CD8-positive, alpha-beta T cell (primary cell): ENCODE measurements at regions of chr6 and their contacts with region 1.

Region 1: DNA sequence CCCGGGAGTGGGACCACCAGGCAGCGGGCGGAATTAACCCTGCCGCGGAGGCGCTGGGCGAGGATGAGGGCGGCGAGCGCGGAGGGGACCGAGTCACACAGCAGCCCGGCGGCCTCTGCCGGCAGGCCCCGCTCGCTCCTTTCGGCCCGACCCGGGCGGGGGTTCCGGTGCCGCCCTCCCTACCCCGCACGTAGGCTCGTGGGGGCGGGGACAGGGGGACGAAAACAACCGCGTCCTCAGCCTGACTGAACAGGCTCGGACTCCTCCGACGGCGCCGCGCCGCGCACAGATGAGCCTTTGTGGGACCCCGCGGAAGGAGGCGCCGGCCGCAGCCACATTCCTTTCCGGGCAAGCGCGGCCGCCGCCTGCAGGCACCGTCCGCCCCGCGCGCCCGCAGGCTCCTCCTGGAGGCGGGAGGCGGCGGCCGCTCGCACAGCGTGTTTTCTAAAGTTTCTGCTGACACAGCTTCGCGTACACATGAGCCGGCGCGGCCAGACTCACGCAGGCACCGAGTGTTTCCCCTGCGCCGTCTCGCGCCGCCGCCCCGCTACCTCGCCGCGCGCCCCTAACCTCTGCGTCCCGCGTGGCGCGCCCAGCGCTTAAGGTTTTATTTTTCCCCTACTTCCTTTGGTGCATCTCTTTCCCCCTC is 244.3 kb downstream of the ARID1B start:
- DNase-seq: peak; percentile 75 to 93 (median 89)
- ATAC-seq: peak; percentile 75
- H3K4me3 ChIP-seq: peak overlapping the region; percentile 66 to 93
- H3K4me3 Mint-ChIP-seq: peak overlapping the region; percentile 95
- H3K27ac ChIP-seq: peak overlapping the region; percentile 96 to 98
- H3K27ac Mint-ChIP-seq: peak overlapping the region; percentile 100
- H3K4me1 ChIP-seq: peaks cover 8% of the 10 kb centered on the region
- H3K4me1 Mint-ChIP-seq: peaks cover 59% of the 10 kb centered on the region
- H3K27me3 ChIP-seq: no peaks in the 10 kb centered on the region
- H3K27me3 Mint-ChIP-seq: no peaks in the 10 kb centered on the region
- CTCF ChIP-seq: no peak

Region 2: DNA sequence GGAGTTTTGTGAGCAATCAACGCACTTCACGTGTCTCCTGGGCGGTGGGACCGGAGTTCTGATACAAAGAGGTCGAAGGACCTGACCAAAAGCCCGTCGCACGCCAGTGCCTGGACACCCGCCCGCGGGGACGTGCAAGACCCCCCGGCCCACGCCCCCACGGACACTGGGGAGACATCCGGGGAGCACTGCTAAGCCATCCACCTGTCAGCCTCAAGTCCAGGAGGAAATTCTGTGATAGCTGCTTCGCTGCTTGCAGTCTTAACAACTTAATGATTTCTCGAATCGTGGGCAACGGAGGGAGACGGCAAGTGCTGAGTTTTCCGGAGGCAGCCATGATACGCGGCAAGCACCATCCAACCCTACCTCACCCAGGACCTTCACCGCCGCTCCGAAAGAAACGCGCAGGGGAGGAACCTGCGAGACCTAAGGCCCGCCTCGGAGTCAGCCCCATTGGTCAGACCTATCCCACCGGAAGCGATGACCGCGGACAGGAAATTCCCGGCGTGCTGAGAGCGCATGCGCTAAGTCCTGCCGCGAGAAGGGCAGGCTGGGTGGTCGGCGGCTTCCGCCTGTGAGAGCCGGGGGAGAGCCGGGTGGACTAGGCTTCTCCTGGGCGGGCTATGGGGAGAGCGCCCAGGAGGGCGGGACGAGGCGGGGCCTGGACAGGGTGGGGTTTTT is 1707.2 kb before region 1 on chr6 and contains the start of gene TFB1M:
- CTCF ChIA-PET with region 1: no interaction called
- POLR2A ChIA-PET with region 1: no interaction called
- intact Hi-C with region 1: loop called in 1 of 2 experiments (anchors 2 kb)
- DNase-seq: peak; percentile 91 to 99 (median 97)
- ATAC-seq: peak; percentile 93
- H3K4me3 ChIP-seq: peak within 1 kb of the TSS; percentile 92 to 97
- H3K4me3 Mint-ChIP-seq: peak within 1 kb of the TSS; percentile 98
- H3K27ac ChIP-seq: peak within 1 kb of the TSS; percentile 83 to 87
- H3K27ac Mint-ChIP-seq: peak within 1 kb of the TSS; percentile 97
- H3K4me1 ChIP-seq: peaks cover 7% of the 10 kb centered on the region
- H3K4me1 Mint-ChIP-seq: peaks cover 35% of the 10 kb centered on the region
- H3K27me3 ChIP-seq: no peaks in the 10 kb centered on the region
- H3K27me3 Mint-ChIP-seq: no peaks in the 10 kb centered on the region
- CTCF ChIP-seq: no peak
- total RNA-seq, gene TFB1M: 6.3 to 7.9 TPM

Region 3: DNA sequence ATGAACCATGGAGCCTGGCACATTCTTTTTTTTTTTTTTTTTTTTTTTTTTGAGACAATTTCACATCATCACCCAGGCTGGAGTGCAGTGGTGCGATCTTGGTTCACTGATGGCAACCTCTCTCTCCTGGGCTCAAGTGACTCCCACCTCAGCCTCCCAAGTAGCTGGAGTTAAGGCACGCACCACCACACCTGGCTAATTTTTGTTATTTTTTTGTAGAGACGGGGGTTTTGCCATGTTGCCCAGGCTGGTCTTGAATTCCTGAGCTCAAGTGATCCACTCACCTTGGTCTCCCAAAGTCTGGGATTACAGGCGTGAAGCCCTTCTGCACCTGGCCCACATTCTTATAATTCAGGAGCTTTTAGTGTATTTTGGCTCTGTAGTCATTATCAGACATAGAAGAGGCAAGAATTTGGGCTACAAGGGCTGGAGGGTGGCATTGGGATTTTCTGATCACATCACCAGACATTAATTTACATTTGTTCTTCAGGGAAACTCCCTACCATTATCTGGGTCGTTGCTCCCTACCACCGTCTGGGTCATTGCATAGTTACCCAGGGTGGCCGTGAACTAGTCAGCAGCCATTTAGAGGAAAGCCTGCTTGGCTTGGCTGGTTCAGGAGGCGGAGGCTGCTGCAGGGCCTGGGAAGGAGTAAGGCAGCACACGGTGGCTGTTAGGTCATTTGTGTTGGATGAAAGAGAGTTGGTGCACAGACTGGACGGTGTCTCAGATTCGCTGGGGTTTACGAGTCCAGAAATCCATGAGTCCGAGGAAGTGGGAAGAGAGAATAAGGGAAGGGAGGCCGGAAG is 226.7 kb before region 1 on chr6:
- CTCF ChIA-PET with region 1: no interaction called
- POLR2A ChIA-PET with region 1: no interaction called
- intact Hi-C with region 1: no loop called
- DNase-seq: peak in 1 of 9 experiments; percentile 42
- ATAC-seq: peak; percentile 28
- H3K4me3 ChIP-seq: no peak overlapping the region
- H3K4me3 Mint-ChIP-seq: peak overlapping the region; percentile 46
- H3K27ac ChIP-seq: no peak overlapping the region
- H3K27ac Mint-ChIP-seq: peak overlapping the region; percentile 84
- H3K4me1 ChIP-seq: peaks cover 64% of the 10 kb centered on the region
- H3K4me1 Mint-ChIP-seq: peaks cover 91% of the 10 kb centered on the region
- H3K27me3 ChIP-seq: no peaks in the 10 kb centered on the region
- H3K27me3 Mint-ChIP-seq: no peaks in the 10 kb centered on the region
- CTCF ChIP-seq: no peak

Region 4: GRCh38 chr6:156953479-156954146 is 67.9 kb before region 1 on chr6:
- CTCF ChIA-PET with region 1: no interaction called
- POLR2A ChIA-PET with region 1: no interaction called
- intact Hi-C with region 1: loop called in 1 of 2 experiments (anchors 2 kb)
- DNase-seq: peak in 5 of 9 experiments; percentile 33 to 87 (median 67)
- ATAC-seq: peak; percentile 93
- H3K4me3 ChIP-seq: no peak overlapping the region
- H3K4me3 Mint-ChIP-seq: no peak overlapping the region
- H3K27ac ChIP-seq: no peak overlapping the region
- H3K27ac Mint-ChIP-seq: no peak overlapping the region
- H3K4me1 ChIP-seq: peaks cover 30% of the 10 kb centered on the region
- H3K4me1 Mint-ChIP-seq: peaks cover 73% of the 10 kb centered on the region
- H3K27me3 ChIP-seq: no peaks in the 10 kb centered on the region
- H3K27me3 Mint-ChIP-seq: no peaks in the 10 kb centered on the region
- CTCF ChIP-seq: peak; percentile 45

Region 5: GRCh38 chr6:157054531-157054979 is 33.1 kb after region 1 on chr6:
- CTCF ChIA-PET with region 1: no interaction called
- POLR2A ChIA-PET with region 1: interaction called, 7 read pairs
- intact Hi-C with region 1: loop called in 1 of 2 experiments (anchors 1 kb)
- DNase-seq: peak in 5 of 9 experiments; percentile 14 to 87 (median 53)
- ATAC-seq: peak; percentile 94
- H3K4me3 ChIP-seq: no peak overlapping the region
- H3K4me3 Mint-ChIP-seq: peak overlapping the region; percentile 43
- H3K27ac ChIP-seq: peak overlapping the region; percentile 13 to 73
- H3K27ac Mint-ChIP-seq: peak overlapping the region; percentile 95
- H3K4me1 ChIP-seq: peaks cover 26% of the 10 kb centered on the region
- H3K4me1 Mint-ChIP-seq: peaks cover 39% of the 10 kb centered on the region
- H3K27me3 ChIP-seq: no peaks in the 10 kb centered on the region
- H3K27me3 Mint-ChIP-seq: no peaks in the 10 kb centered on the region
- CTCF ChIP-seq: no peak

Region 6: DNA sequence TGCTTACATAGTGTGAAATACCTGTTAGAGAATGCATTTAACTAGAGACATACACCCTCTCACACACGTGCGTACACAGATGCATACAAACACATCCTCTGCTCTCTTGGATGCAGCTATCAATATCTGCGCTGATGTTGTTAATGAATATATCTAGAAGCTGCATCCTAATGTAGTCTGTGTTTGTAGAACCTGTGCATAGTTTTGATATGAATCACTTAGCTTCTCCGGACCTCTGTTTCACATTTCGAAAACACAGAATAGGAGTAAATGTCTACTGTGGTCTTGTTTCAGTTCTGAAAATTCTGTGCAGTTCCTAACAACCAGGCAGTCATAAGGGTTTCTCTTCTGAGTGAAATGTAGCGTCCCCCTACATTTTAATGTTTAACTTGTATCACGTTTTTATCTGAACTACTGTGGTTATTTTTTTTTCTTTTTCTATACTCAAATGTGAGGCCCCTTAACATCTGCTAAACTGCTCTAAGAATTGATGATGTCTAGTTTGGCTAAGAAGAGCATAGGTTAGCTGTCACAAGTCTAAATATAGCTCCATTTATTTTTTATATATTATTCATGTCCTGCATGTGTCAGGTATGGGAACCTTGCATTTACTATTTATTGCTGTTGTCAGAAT is 47.3 kb after region 1 on chr6:
- CTCF ChIA-PET with region 1: no interaction called
- POLR2A ChIA-PET with region 1: no interaction called
- intact Hi-C with region 1: no loop called
- DNase-seq: no peak
- ATAC-seq: no peak
- H3K4me3 ChIP-seq: no peak overlapping the region
- H3K4me3 Mint-ChIP-seq: no peak overlapping the region
- H3K27ac ChIP-seq: no peak overlapping the region
- H3K27ac Mint-ChIP-seq: no peak overlapping the region
- H3K4me1 ChIP-seq: peaks cover 15% of the 10 kb centered on the region
- H3K4me1 Mint-ChIP-seq: peaks cover 52% of the 10 kb centered on the region
- H3K27me3 ChIP-seq: no peaks in the 10 kb centered on the region
- H3K27me3 Mint-ChIP-seq: no peaks in the 10 kb centered on the region
- CTCF ChIP-seq: no peak

Region 7: GRCh38 chr6:158819213-158819909 is 1797.9 kb after region 1 on chr6 and contains the start of gene EZR:
- CTCF ChIA-PET with region 1: no interaction called
- POLR2A ChIA-PET with region 1: no interaction called
- intact Hi-C with region 1: loop called in 1 of 2 experiments (anchors 5 kb)
- DNase-seq: peak; percentile 75 to 95 (median 88)
- ATAC-seq: peak; percentile 63
- H3K4me3 ChIP-seq: peak within 1 kb of the TSS; percentile 49 to 83
- H3K4me3 Mint-ChIP-seq: peak within 1 kb of the TSS; percentile 98
- H3K27ac ChIP-seq: peak within 1 kb of the TSS; percentile 89 to 91
- H3K27ac Mint-ChIP-seq: peak within 1 kb of the TSS; percentile 97
- H3K4me1 ChIP-seq: peaks cover 27% of the 10 kb centered on the region
- H3K4me1 Mint-ChIP-seq: peaks cover 43% of the 10 kb centered on the region
- H3K27me3 ChIP-seq: no peaks in the 10 kb centered on the region
- H3K27me3 Mint-ChIP-seq: no peaks in the 10 kb centered on the region
- CTCF ChIP-seq: no peak
- total RNA-seq, gene EZR: 626 to 627 TPM